Naive thymus-derived CD4-positive, alpha-beta T cell (primary cell): ENCODE measurements at regions of chr21 and their contacts with region 1.

Region 1: GRCh38 chr21:14454016-14455009 is 71.4 kb upstream of the HSPA13 start:
- DNase-seq: no peak
- ATAC-seq: no peak
- H3K4me3 ChIP-seq: no peak overlapping the region
- H3K4me3 Mint-ChIP-seq: peak overlapping the region in 1 of 10 donors; percentile 53
- H3K27ac ChIP-seq: no peak overlapping the region
- H3K27ac Mint-ChIP-seq: peak overlapping the region in 2 of 9 donors; percentile 57 to 87
- H3K4me1 ChIP-seq: peaks cover 0 to 4% of the 10 kb centered on the region in 2 donors
- H3K4me1 Mint-ChIP-seq: peaks cover 0 to 62% (median 10%) of the 10 kb centered on the region in 7 donors
- H3K27me3 ChIP-seq: no peaks in the 10 kb centered on the region
- H3K27me3 Mint-ChIP-seq: no peaks in the 10 kb centered on the region

Region 2: DNA sequence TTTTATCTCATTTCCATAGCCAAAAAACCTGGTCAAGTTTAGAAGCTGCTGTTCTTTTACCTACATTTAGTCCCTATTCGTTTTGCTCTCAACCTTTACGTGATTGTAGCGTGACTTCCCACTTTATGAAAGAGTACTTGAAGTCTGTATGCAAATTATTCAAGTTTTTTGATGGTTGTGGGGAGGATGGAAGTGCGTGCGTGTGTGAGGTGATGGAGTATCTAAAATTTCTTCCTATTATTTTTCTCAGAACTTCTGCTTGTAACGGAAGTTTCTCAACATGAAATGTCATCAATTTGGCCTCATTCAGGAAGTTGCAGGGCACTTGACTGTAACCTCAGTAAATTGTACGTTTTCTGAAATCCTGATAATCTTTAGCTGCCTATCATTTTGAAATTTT is 27.9 kb after region 1 on chr21:
- CTCF ChIA-PET with region 1: no interaction called
- POLR2A ChIA-PET with region 1: no interaction called
- intact Hi-C with region 1: loop called in 1 of 2 experiments (anchors 2 kb)
- DNase-seq: peak in 7 of 9 donors; percentile 29 to 66 (median 53)
- ATAC-seq: peak; percentile 89
- H3K4me3 ChIP-seq: peak overlapping the region; percentile 34
- H3K4me3 Mint-ChIP-seq: peak overlapping the region; percentile 1 to 79 (median 68)
- H3K27ac ChIP-seq: peak overlapping the region; percentile 9
- H3K27ac Mint-ChIP-seq: peak overlapping the region; percentile 37 to 90 (median 72)
- H3K4me1 ChIP-seq: peaks cover 0 to 13% of the 10 kb centered on the region in 2 donors
- H3K4me1 Mint-ChIP-seq: peaks cover 8 to 64% (median 16%) of the 10 kb centered on the region in 7 donors
- H3K27me3 ChIP-seq: no peaks in the 10 kb centered on the region
- H3K27me3 Mint-ChIP-seq: no peaks in the 10 kb centered on the region

Region 3: GRCh38 chr21:14533504-14534428 is 79.5 kb after region 1 on chr21:
- CTCF ChIA-PET with region 1: no interaction called
- POLR2A ChIA-PET with region 1: no interaction called
- intact Hi-C with region 1: loop called in 1 of 2 experiments (anchors 5 kb)
- DNase-seq: peak in 3 of 9 donors; percentile 15 to 49 (median 22)
- ATAC-seq: peak; percentile 88
- H3K4me3 ChIP-seq: peak overlapping the region; percentile 22
- H3K4me3 Mint-ChIP-seq: peak overlapping the region in 8 of 10 donors; percentile 3 to 85 (median 47)
- H3K27ac ChIP-seq: no peak overlapping the region
- H3K27ac Mint-ChIP-seq: peak overlapping the region in 8 of 9 donors; percentile 25 to 95 (median 82)
- H3K4me1 ChIP-seq: peaks cover 10 to 30% of the 10 kb centered on the region in 2 donors
- H3K4me1 Mint-ChIP-seq: peaks cover 37 to 81% (median 67%) of the 10 kb centered on the region in 7 donors
- H3K27me3 ChIP-seq: no peaks in the 10 kb centered on the region
- H3K27me3 Mint-ChIP-seq: no peaks in the 10 kb centered on the region

Region 4: DNA sequence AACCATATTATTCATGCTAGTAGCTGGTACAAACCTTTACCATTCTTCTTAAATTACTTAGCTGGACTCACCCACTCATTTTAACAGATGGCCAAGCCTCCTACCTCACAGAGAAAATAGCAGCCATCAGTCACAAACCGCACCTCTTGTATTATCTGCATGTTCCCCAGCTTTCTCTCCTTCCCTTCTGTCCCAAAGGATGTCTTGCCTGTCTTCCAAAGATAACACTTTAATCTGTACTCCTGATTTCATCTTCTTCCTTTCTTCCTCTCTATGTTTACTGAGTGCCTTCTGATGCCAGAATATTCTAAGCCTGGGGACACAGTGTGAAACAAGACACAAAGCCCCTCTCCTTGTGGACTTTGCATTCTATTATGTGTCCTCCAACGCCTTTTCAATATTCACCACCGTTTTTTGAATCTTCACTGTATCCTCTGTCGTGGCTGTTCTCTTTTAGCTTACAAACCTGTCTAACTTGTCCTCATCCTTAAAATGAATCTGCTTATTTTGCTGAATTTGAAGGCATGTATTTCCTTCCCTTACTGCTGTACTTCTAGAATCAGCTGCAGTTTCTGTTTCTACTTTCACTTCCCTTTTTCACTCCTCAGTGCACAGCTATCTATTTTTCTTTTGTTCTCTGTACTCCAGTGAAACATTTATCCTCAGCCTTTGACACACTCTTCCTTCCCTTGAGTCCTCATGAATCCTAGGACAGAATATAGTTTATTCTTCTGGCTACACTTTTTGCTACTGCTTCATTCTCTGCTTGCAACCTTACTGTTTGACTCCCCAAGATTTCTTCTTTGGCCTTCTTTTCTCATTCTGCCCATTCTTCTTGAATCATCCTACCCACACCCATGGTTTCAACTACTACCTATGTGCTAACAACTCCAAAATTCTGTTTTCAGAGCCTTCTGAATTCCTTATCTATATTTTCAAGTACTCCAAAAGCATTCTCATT is 308.7 kb after region 1 on chr21:
- CTCF ChIA-PET with region 1: no interaction called
- POLR2A ChIA-PET with region 1: no interaction called
- intact Hi-C with region 1: loop called in 1 of 2 experiments (anchors 5 kb)
- DNase-seq: peak in 3 of 9 donors; percentile 11 to 20 (median 15)
- ATAC-seq: peak; percentile 84
- H3K4me3 ChIP-seq: peak overlapping the region; percentile 21
- H3K4me3 Mint-ChIP-seq: no peak overlapping the region
- H3K27ac ChIP-seq: peak overlapping the region; percentile 26
- H3K27ac Mint-ChIP-seq: no peak overlapping the region
- H3K4me1 ChIP-seq: peaks cover 0 to 10% of the 10 kb centered on the region in 2 donors
- H3K4me1 Mint-ChIP-seq: peaks cover 0 to 8% (median 6%) of the 10 kb centered on the region in 7 donors
- H3K27me3 ChIP-seq: no peaks in the 10 kb centered on the region
- H3K27me3 Mint-ChIP-seq: no peaks in the 10 kb centered on the region